Gastrocnemius medialis (tissue), 4 donors: ENCODE measurements at regions of chr19 and their contacts with region 1.

Region 1: DNA sequence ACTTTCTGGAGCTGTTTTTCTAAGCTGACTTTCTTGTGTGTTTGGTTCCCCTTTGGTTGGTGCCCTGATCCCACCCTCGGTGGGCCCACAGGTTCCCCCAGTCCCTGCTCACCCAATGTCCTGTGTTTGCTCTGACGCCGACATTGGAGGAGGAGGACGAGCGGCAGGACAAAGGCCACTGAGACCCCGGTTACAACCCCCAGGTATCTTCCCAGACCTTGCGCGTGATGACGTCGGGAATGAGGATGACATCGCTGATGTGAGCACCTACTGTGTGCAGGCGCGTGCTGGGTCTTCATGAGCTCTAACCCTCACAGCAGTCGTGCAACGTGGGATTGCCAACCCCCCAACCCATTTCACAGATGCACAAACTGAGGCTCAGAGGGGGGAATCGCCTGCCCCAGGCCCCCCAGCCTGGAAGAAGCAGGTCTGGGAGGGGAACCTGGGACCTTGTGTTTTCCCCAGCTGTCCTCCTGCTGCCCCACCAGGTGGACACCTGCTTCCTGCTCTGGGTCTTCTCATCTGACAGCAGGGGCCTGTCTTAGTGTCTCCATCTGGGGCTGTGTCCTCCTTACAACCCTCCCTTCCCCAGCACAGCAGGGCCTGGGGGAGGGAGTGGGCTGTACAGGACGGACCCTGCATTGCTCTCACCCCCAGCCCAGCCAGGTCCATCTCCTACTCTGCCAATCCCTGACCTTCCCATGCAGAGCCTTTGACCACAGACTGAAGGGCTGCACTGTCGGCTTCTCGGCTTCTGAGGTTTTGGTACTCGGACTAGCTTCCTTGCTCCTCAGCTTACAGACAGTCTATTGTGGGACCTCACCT is 4.7 kb upstream of the LILRA6 start:
- DNase-seq: no peak
- ATAC-seq: no peak
- H3K4me3 ChIP-seq: no peak overlapping the region
- H3K27ac ChIP-seq: no peak overlapping the region
- H3K4me1 ChIP-seq: no peaks in the 10 kb centered on the region
- H3K27me3 ChIP-seq: no peaks in the 10 kb centered on the region
- CTCF ChIP-seq: no peak
- POLR2A ChIP-seq: no peak

Region 2: GRCh38 chr19:54218960-54219661 is 28.2 kb before region 1 on chr19:
- in situ Hi-C with region 1: no loop called
- intact Hi-C with region 1: loop called (anchors 2 kb)
- DNase-seq: no peak
- ATAC-seq: no peak
- H3K4me3 ChIP-seq: no peak overlapping the region
- H3K27ac ChIP-seq: no peak overlapping the region
- H3K4me1 ChIP-seq: no peaks in the 10 kb centered on the region
- H3K27me3 ChIP-seq: peaks cover 0 to 4% (median 0%) of the 10 kb centered on the region in 3 donors
- CTCF ChIP-seq: no peak
- POLR2A ChIP-seq: no peak